Heart right ventricle (tissue), 16 donors: ENCODE measurements at regions of chr2 and their contacts with region 1.

Region 1: GRCh38 chr2:240021488-240022104 is 3.5 kb downstream of the NDUFA10 start:
- DNase-seq: peak; percentile 45 to 61
- ATAC-seq: no peak
- H3K4me3 ChIP-seq: no peak overlapping the region
- H3K27ac ChIP-seq: no peak overlapping the region
- H3K4me1 ChIP-seq: peaks cover 0 to 29% (median 21%) of the 10 kb centered on the region in 9 donors
- H3K27me3 ChIP-seq: no peaks in the 10 kb centered on the region
- CTCF ChIP-seq: peak; percentile 37 to 86 (median 78)

Region 2: DNA sequence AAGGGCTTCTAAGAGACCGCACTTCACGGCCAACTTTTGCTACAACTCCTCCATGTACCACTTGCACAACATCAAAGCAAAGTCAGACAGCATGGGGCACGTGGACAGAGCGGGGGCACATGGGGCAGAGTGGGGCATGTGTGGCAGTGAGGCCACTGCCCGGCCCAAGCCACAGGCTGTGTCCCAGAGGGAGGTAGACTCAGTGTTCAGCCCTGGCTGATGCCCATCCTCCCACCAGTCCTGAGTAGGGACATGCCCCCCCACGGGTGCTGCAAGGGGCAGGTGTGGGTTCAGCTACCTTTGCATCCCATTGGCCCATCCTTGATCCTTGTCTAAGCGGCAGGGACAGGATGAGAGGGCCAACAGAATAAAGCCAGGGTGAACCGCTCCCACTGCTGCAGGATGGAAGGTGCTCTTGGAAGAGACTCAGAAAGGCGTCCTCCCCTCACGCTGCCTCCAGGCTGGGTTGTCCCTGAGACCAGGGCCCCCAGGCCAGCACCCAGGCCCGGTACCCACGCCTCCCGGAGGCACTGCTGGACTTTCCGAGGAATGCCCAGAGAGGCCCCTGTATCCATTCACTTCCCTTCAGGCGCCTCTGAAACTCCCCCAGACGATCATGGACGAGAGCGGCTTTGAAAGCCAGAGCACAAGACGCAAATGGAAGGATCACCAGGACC is 214.7 kb before region 1 on chr2:
- intact Hi-C with region 1: no loop called
- DNase-seq: no peak
- ATAC-seq: no peak
- H3K4me3 ChIP-seq: no peak overlapping the region
- H3K27ac ChIP-seq: no peak overlapping the region
- H3K4me1 ChIP-seq: peaks cover 0 to 4% (median 0%) of the 10 kb centered on the region in 9 donors
- H3K27me3 ChIP-seq: peaks cover 0 to 61% (median 32%) of the 10 kb centered on the region in 7 donors
- CTCF ChIP-seq: no peak

Region 3: DNA sequence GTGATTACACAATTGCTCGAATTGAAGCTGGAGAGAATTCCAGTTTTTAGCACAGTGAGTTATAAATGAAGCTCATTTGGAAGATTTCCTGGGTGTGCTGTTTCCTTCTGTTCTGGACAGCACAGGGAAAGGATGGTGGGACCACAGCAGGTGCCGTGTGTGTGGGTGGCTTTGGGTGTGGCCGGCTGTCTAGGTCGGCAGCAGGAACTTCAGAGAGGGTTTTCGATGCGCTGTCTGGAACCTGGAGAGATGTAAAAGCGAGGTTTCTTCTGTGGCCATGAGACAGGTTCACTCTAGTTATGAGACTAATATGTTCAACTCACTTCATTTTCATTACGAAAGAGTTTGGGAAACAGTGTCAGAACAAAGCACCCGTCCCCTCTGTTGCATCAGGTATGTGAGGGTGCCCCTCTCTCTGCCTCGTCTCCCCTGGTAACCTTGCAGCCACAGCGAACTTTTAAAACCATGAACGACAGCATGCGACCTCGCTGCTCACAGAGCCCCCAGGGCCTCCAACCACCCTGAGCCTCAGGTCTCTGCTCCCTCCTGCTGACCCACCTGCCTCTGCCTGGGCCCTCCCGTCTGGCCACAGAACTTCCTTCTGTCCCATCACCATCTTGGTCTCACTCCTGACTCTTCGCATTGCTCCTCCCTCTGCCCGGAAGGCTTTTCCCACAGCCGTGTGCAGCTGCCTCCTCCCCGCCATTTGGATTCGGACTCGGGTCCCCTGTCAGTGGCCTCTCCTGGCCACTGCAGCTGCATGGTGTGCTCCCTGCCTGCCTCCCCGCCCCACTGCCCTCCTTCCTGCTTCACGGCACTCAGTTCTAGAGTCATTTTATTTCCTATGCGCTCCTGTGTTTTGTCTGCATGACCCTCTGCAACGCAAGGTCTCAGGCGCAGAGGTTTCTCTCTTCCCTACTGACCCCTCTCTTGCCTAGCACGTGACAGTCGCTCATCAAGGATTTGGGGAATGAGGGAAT is 147.7 kb before region 1 on chr2:
- intact Hi-C with region 1: no loop called
- DNase-seq: no peak
- ATAC-seq: no peak
- H3K4me3 ChIP-seq: no peak overlapping the region
- H3K27ac ChIP-seq: no peak overlapping the region
- H3K4me1 ChIP-seq: no peaks in the 10 kb centered on the region
- H3K27me3 ChIP-seq: peaks cover 0 to 55% (median 8%) of the 10 kb centered on the region in 7 donors
- CTCF ChIP-seq: no peak

Region 4: DNA sequence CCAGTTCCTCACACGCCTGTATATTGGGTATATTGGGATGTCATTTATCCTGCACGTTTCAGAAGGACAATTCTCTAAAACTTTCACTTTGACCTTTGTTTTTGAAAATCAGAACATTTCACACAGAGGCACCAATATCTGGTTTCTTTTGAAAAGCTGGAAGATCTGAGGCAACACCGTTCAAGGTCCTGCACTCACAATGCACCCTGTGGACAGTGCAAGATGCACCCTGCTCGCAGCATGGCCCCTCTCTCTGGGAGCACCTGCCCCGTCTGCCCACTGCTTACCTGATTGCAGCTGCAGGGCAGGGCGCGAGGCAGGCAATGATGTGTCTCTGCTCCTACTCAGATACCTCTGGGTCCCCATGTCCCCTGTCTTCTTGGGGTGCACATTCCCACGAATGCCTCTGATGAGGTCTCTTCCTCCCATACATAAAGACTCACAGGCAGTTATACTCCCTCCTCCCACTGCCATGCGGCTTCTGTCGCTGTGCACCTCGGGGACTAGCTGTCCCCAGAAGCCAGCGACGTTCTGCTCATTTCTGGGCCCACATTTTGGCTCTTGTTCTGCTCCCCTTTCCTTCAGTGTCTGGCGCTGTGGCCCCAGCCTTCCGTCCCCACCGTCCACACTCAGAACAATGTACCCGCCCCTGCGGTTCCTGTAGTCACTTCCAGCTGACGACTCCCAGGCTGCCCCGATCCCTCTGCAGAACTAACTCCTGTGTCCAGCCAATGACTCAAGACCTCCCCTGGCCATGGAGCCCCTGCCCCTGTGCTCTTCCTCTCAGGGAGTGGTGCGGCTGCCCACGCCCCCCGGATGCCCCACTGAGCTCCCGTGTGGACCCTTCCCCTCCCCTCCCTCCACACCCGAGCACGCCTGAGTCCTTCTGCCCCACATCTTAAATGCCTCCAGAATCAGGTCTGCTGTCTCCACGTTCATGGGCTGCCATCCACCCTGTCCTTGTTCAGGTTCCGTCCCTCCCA is 31.9 kb after region 1 on chr2 and contains the start of gene OR6B3:
- intact Hi-C with region 1: loop called in 1 of 10 experiments (anchors 1 kb)
- DNase-seq: no peak
- ATAC-seq: no peak
- H3K4me3 ChIP-seq: no peak within 1 kb of the TSS
- H3K27ac ChIP-seq: no peak within 1 kb of the TSS
- H3K4me1 ChIP-seq: no peaks in the 10 kb centered on the region
- H3K27me3 ChIP-seq: peaks cover 0 to 92% (median 70%) of the 10 kb centered on the region in 7 donors
- CTCF ChIP-seq: no peak
- total RNA-seq, gene OR6B3: not detected